Gastrocnemius medialis (tissue), 4 donors: ENCODE measurements at regions of chr17 and their contacts with region 1.

Region 1: DNA sequence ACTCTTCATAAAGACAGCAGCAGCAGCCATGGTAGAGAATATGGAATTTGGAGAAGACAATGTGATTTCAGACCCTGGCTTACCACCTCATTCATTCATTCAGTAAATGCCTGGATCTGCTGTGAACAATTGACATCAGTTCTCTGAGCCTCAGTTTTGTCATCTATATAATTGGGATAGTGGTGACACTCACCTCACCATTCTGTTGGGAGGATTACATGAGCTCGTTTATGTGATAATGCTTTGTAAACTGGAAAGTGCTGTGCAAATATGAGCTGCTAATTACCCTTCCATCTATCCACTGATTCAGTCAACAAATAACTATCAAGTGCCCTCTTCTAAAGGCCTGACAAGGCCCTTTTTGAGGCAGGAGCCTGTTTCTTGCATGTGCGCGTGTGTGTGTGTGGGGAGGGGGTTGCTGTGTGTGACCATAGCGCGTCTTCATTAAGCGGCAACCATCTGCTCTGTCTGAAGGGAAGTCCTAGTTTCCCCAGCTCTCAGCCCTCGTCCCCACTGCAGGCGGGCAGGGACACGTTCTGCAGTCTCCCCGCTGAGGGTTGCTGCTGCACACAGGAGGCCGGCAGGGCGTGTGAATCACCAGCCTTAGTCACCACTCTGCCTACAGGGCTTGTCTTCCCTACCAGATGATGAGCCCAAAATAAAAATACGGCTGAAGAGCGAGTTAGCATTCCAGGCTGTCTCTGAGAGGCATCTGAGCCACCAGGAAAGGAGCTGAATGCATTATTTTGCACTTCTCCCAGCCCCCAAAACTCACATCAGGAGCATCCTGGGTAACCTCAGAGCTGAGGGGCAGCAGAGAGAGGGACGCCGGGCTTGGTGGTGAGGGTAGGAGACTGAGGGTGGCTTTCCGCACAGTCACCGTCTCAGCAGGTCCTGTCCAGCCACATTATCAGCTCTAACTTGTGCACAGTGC is 19.9 kb downstream of the ARL4D start:
- DNase-seq: no peak
- ATAC-seq: peak in 1 of 2 donors; percentile 30
- H3K4me3 ChIP-seq: no peak overlapping the region
- H3K27ac ChIP-seq: no peak overlapping the region
- H3K4me1 ChIP-seq: peaks cover 0 to 7% of the 10 kb centered on the region in 2 donors
- H3K27me3 ChIP-seq: no peaks in the 10 kb centered on the region
- CTCF ChIP-seq: no peak
- POLR2A ChIP-seq: no peak

Region 2: DNA sequence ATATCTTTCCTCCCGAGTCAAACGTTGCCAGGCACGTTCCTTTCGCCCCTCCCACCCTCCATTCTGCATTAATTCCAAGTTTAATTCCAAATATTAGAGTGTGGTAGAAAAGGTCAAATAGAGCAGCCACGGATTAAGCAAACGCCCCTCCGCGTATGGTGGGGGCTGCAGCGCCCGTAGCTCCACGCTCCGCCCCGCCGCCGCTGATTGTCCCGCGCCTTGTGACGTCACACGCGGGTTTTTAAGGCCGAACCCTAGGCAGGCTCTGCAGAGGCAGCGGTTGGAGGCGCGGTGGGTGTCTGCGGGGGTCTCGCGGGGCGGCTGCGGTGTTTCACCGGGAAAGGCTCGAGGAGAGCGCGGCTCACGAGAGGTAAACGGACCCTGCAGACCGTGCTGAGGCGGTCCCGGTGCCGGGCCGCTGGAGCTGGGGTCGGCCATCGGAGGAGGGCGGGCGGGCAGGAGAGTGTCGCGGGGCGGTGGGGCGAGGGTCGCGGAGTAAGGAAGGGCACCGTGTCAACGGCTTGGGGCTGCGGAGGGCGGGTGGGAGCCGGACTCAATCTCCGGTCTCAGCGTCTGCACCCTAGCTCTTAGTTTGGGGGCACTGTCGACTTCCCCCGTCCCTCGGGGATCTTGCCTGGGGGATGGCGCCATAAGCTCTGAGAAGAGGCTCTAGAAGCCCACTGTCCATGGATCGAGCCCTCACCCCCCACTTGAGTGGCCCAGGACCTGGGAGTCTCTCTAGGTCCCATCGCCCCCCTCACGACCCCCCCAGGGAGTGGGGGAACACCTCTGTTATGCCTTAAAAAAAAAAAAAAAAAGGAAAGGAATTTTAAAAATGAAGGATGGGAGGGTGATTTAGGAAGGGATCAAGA is 19.7 kb before region 1 on chr17 and contains the start of gene ARL4D:
- in situ Hi-C with region 1: no loop called
- intact Hi-C with region 1: no loop called
- DNase-seq: peak; percentile 73 to 74
- ATAC-seq: peak; percentile 70 to 74
- H3K4me3 ChIP-seq: peak within 1 kb of the TSS; percentile 62 to 87 (median 72)
- H3K27ac ChIP-seq: peak within 1 kb of the TSS; percentile 71 to 84 (median 78)
- H3K4me1 ChIP-seq: peaks cover 3 to 27% of the 10 kb centered on the region in 2 donors
- H3K27me3 ChIP-seq: no peaks in the 10 kb centered on the region
- CTCF ChIP-seq: no peak
- POLR2A ChIP-seq: peak; percentile 56 to 87
- total RNA-seq, gene ARL4D: 0.17 to 2.0 (median 1.3) TPM

Region 3: GRCh38 chr17:43477832-43478634 is 59.3 kb after region 1 on chr17:
- in situ Hi-C with region 1: loop called in 1 of 4 experiments (anchors 10 kb)
- intact Hi-C with region 1: no loop called
- DNase-seq: no peak
- ATAC-seq: no peak
- H3K4me3 ChIP-seq: no peak overlapping the region
- H3K27ac ChIP-seq: no peak overlapping the region
- H3K4me1 ChIP-seq: no peaks in the 10 kb centered on the region
- H3K27me3 ChIP-seq: no peaks in the 10 kb centered on the region
- CTCF ChIP-seq: no peak
- POLR2A ChIP-seq: no peak

Region 4: GRCh38 chr17:43517615-43518386 is 99.1 kb after region 1 on chr17:
- in situ Hi-C with region 1: no loop called
- intact Hi-C with region 1: no loop called
- DNase-seq: no peak
- ATAC-seq: no peak
- H3K4me3 ChIP-seq: no peak overlapping the region
- H3K27ac ChIP-seq: peak overlapping the region in 1 of 4 donors; percentile 16
- H3K4me1 ChIP-seq: peaks cover 10 to 19% of the 10 kb centered on the region in 2 donors
- H3K27me3 ChIP-seq: no peaks in the 10 kb centered on the region
- CTCF ChIP-seq: no peak
- POLR2A ChIP-seq: no peak